ENCODE measurements at regions of chr3 and their contacts with region 1.

Region 1: GRCh38 chr3:160003520-160004128 is 15.0 kb downstream of the IL12A start:
- DNase-seq: peak; percentile 58
- H3K4me3 ChIP-seq: no peak overlapping the region
- H3K27ac ChIP-seq: no peak overlapping the region
- H3K4me1 ChIP-seq: peaks cover 4% of the 10 kb centered on the region
- H3K27me3 ChIP-seq: no peaks in the 10 kb centered on the region
- CTCF ChIP-seq: peak; percentile 75

Region 2: DNA sequence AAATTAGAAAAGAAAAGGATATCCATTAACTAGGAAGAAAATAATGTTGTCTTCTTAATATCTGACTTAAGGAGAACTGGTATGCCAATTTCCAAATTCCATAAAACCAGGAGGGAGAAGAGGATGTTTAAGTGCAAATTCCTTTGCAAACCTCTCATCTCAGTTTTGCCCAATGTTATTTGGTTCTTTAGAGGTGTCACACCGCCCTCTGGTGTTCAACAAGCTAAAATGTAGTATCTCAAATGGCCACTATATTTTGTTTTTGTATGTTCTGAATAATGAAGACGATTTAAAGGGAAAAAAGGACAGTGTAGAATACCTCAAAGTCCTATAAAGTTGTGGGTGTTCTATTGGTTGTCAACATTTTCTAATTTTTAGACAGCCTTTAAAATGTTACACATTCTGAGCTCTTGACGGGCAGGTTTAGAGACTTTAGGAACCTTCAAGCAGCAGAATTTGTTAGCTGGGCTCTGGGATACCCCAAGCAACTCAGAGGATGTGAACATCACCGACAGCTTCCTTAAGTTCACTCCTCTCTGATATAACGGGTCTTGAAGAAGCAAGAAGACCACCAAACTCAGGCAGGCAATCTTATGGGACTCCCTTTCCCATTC is 743.5 kb before region 1 on chr3:
- intact Hi-C with region 1: loop called (anchors 5 kb)
- DNase-seq: no peak
- H3K4me3 ChIP-seq: no peak overlapping the region
- H3K27ac ChIP-seq: no peak overlapping the region
- H3K4me1 ChIP-seq: no peaks in the 10 kb centered on the region
- H3K27me3 ChIP-seq: no peaks in the 10 kb centered on the region
- CTCF ChIP-seq: peak; percentile 73

Region 3: DNA sequence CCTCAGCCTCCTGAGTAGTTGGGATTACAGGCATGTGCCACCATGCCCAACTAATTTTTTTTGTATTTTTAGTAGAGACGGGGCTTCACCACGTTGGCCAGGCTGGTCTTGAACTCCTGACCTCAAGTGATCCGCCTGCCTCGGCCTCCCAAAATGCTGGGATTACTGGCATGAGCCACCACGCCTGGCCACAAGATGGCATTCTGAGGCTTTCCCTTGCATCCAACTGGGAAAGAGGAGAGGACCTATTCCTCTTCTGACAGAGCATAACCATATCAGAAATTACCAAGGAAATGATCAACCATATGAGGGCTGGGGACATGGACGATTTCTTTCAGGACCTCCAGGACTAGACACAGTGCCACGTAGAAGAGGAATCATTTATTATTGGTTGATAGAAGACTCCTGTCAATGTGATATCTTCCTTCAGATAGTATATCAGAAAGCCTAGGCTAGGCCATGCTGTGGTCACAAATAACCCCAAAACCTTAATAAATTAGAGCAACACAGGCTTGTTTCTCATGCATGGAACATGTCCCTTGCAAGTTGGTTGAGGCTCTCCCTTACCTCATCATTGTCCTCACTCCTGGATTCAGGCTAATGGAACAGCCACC is 387.3 kb before region 1 on chr3:
- intact Hi-C with region 1: loop called (anchors 5 kb)
- DNase-seq: peak; percentile 31
- H3K4me3 ChIP-seq: no peak overlapping the region
- H3K27ac ChIP-seq: no peak overlapping the region
- H3K4me1 ChIP-seq: peaks cover 16% of the 10 kb centered on the region
- H3K27me3 ChIP-seq: no peaks in the 10 kb centered on the region
- CTCF ChIP-seq: peak; percentile 75

Region 4: DNA sequence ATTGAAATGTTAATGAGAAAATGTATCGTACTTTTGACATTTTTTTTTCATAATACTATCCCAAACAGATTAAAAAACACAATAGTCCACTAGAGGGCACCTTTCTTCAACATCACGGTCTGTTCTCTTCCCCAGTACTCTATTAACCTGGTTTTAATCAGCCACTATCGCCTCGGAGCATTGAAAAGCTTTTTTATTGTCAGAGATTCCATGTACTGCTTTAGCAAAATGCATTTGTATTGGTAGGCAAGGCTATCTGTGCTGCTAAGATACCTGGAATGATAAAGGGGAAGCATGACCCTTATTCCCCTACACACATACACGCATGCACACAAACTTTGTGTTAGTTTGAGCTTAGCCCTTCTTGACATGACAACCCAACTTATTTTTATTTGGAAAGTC is 175.1 kb before region 1 on chr3:
- intact Hi-C with region 1: loop called (anchors 5 kb)
- DNase-seq: no peak
- H3K4me3 ChIP-seq: no peak overlapping the region
- H3K27ac ChIP-seq: peak overlapping the region; percentile 70
- H3K4me1 ChIP-seq: peaks cover 50% of the 10 kb centered on the region
- H3K27me3 ChIP-seq: no peaks in the 10 kb centered on the region
- CTCF ChIP-seq: peak; percentile 70

Region 5: DNA sequence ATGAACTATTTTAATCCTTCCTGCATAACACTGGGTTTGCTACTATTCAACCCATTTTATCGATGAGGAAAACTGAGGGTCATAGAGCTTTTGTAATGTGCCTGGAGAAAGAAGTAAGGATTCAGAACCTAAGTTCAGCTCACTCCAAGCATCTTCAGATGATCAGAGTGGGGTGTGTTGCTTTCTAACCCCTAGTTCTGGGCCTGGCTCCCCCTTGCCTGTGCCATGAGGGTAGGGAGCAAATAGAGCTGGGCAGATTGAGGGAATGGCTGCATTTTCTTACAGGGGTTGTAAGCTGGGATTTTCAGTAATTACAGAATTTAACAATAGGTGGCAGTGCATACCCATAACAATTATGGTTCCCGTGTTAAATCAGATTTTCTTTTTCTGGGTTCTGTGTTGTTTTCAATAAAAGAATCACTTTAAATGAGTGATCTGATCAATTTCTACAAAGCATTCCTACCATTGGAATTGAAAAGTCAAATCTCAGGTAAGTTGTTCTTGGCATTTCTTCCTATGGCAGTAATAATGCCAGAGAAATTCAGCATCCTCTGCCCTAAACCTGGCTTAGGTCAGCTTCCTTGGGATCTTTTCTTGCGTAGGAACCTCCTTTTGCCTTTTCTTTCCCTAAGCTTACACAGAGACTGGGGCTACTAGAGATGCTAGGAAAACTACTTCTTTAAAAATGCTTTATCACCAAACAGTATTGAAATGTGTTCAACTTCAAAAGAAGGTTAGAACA is 118.8 kb before region 1 on chr3:
- intact Hi-C with region 1: loop called (anchors 5 kb)
- DNase-seq: no peak
- H3K4me3 ChIP-seq: no peak overlapping the region
- H3K27ac ChIP-seq: peak overlapping the region; percentile 29
- H3K4me1 ChIP-seq: peaks cover 82% of the 10 kb centered on the region
- H3K27me3 ChIP-seq: no peaks in the 10 kb centered on the region
- CTCF ChIP-seq: peak; percentile 70